PC-3 (cell line): ENCODE measurements at regions of chr12 and their contacts with region 1.

Region 1: GRCh38 chr12:128259556-128260070 is 7.4 kb upstream of the TMEM132C start:
- DNase-seq: peak; percentile 47
- ATAC-seq: no peak
- H3K4me3 ChIP-seq: no peak overlapping the region
- H3K27ac ChIP-seq: no peak overlapping the region
- H3K4me1 ChIP-seq: no peaks in the 10 kb centered on the region
- H3K27me3 ChIP-seq: peaks cover 33% of the 10 kb centered on the region
- CTCF ChIP-seq: peak; percentile 88

Region 2: GRCh38 chr12:128387811-128388422 is 128.3 kb after region 1 on chr12:
- CTCF ChIA-PET with region 1: interaction called, 10 read pairs
- POLR2A ChIA-PET with region 1: no interaction called
- intact Hi-C with region 1: no loop called
- DNase-seq: peak; percentile 65
- ATAC-seq: peak; percentile 84
- H3K4me3 ChIP-seq: no peak overlapping the region
- H3K27ac ChIP-seq: no peak overlapping the region
- H3K4me1 ChIP-seq: no peaks in the 10 kb centered on the region
- H3K27me3 ChIP-seq: peaks cover 65% of the 10 kb centered on the region
- CTCF ChIP-seq: peak; percentile 77